Gastrocnemius medialis (tissue), 4 donors: ENCODE measurements at regions of chr17 and their contacts with region 1.

Region 1: GRCh38 chr17:49414622-49415350 is at the start of gene PHB1:
- DNase-seq: peak; percentile 97
- ATAC-seq: peak; percentile 99 to 100
- H3K4me3 ChIP-seq: peak within 1 kb of the TSS; percentile 63 to 97 (median 93)
- H3K27ac ChIP-seq: peak within 1 kb of the TSS; percentile 73 to 90 (median 75)
- H3K4me1 ChIP-seq: peaks cover 14 to 18% of the 10 kb centered on the region in 2 donors
- H3K27me3 ChIP-seq: no peaks in the 10 kb centered on the region
- CTCF ChIP-seq: no peak
- POLR2A ChIP-seq: peak in 1 of 2 donors; percentile 32
- total RNA-seq, gene PHB1: 102 to 137 (median 116) TPM

Region 2: GRCh38 chr17:49239963-49240362 is 174.8 kb before region 1 on chr17:
- in situ Hi-C with region 1: no loop called
- intact Hi-C with region 1: no loop called
- DNase-seq: no peak
- ATAC-seq: no peak
- H3K4me3 ChIP-seq: no peak overlapping the region
- H3K27ac ChIP-seq: no peak overlapping the region
- H3K4me1 ChIP-seq: no peaks in the 10 kb centered on the region
- H3K27me3 ChIP-seq: no peaks in the 10 kb centered on the region
- CTCF ChIP-seq: no peak
- POLR2A ChIP-seq: no peak

Region 3: DNA sequence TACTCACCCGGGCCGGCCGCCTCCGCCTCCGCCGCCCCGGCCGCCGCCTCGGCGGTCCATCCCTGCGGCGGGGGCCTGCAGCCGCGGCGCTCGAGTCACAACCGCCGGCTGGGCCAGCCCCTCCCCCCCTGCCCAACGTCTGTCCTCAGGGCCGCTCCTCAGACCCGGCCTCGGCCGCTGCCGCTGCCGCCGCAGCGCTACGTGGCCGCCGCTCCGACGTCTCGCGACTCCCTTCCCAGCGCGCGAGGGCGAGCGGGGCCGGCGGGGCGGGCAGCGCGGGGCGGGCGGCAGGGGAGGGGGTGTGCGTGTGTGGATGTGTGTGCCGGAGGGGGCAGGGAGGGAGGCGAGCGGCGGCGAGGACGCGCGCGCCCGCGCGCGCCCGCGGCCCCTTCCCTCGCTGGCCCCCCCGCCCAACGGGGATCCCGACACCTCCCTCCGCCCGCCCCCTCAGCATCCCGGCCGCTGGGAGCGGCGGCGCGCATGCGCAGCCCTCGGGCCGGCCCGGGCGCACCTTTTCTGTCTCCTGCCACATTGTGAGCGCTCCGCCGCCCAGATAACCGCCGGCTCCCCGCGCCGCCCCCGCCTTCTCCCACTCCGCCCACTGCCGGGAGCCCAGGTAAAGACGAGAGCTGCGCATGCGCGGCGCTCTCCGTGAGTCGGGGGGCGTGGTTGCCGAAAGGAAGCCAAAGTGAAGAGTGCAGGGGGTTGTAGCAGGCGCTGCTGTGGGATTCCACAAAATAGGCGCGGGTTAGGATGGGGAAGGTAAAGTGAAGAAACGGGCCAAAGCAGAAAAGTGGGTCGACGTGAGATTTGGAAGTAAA is 52.7 kb before region 1 on chr17 and contains the start of gene ZNF652:
- in situ Hi-C with region 1: no loop called
- intact Hi-C with region 1: loop called (anchors 2 kb)
- DNase-seq: peak; percentile 78 to 86
- ATAC-seq: peak; percentile 87 to 89
- H3K4me3 ChIP-seq: peak within 1 kb of the TSS; percentile 88 to 97 (median 92)
- H3K27ac ChIP-seq: peak within 1 kb of the TSS; percentile 80 to 92 (median 84)
- H3K4me1 ChIP-seq: peaks cover 29 to 33% of the 10 kb centered on the region in 2 donors
- H3K27me3 ChIP-seq: no peaks in the 10 kb centered on the region
- CTCF ChIP-seq: no peak
- POLR2A ChIP-seq: peak; percentile 21 to 43
- total RNA-seq, gene ZNF652: 32.8 to 49.6 (median 41.1) TPM

Region 4: GRCh38 chr17:49454050-49454449 is 39.3 kb after region 1 on chr17:
- in situ Hi-C with region 1: no loop called
- intact Hi-C with region 1: no loop called
- DNase-seq: no peak
- ATAC-seq: no peak
- H3K4me3 ChIP-seq: no peak overlapping the region
- H3K27ac ChIP-seq: no peak overlapping the region
- H3K4me1 ChIP-seq: no peaks in the 10 kb centered on the region
- H3K27me3 ChIP-seq: no peaks in the 10 kb centered on the region
- CTCF ChIP-seq: no peak
- POLR2A ChIP-seq: no peak

Region 5: DNA sequence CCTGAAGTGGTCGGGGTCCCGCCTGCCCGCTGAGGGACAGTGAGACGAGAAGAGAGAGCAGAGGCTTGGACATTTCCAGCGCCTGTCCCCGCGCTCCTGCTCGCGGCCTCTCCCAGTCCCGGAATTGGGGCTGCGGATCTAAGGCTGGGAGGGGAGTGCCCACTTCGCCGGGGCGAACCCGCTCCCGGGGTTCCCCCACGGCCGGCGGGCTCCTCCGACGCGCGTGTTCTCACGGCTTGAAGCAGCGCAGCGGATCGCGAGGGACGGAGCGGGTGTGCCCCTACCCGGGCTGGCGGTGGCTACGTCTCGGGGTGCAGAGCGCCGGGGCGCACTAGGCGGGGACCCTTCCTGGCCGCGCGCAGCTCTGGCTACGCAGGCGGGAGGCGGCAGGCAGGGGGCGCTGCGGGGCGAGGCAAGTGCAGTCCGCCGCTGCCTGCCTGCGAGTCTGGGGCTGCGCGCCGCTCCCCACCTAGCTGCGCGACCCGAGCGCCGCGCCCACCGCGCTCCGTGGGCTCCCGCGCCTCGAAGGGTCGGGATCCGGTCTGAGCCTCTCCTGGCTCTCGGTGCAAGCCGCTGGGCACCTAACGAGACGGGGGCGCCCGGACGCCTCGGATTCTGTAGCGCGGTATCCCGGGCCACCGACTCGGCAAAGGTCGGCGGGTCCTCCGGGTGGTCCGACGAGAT is 81.5 kb after region 1 on chr17:
- in situ Hi-C with region 1: no loop called
- intact Hi-C with region 1: no loop called
- DNase-seq: peak; percentile 29 to 48
- ATAC-seq: peak; percentile 70 to 83
- H3K4me3 ChIP-seq: peak overlapping the region; percentile 49 to 67 (median 57)
- H3K27ac ChIP-seq: no peak overlapping the region
- H3K4me1 ChIP-seq: peaks cover 19 to 26% of the 10 kb centered on the region in 2 donors
- H3K27me3 ChIP-seq: peaks cover 34 to 47% (median 38%) of the 10 kb centered on the region in 3 donors
- CTCF ChIP-seq: peak; percentile 75 to 97 (median 92)
- POLR2A ChIP-seq: no peak

Region 6: DNA sequence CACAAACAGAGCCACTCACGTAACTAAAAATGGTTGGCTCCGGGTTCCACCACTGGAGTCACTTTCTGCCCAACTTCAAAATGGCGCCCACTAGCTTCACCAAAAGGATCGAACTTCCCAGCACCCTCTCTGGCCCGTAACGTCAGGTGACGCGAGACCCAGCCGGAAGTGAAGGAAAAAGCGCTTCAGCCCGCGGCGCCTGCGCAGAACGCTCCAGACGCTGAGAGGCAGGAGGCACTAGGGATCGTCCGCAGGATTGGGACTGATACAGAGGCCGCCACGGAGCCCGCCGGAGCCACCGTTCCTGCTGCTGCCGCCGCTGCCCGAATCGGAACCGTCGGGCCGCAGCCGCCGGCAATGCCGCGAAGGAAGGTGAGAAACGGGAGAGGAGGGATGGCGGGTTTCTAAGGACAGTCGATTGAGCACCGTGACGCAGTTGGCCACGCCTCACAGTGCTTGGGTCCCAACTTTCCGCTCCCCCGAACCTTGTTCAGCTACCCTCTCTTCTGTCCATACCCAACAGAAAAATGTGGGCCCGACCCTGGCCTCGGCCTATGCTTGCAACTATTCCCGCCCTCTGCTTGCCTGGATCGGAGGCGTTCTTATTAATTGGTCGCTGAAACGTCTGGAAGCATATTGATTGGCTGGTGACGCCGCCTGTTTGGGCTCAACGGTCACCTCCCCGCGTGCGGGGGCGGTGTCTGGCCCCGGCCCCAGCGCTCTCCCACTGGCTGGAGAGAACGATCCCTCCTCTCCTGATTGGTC is 373.9 kb after region 1 on chr17 and contains the start of gene KAT7:
- in situ Hi-C with region 1: no loop called
- intact Hi-C with region 1: loop called (anchors 5 kb)
- DNase-seq: peak; percentile 99 to 100
- ATAC-seq: peak; percentile 94 to 96
- H3K4me3 ChIP-seq: peak within 1 kb of the TSS; percentile 87 to 98 (median 92)
- H3K27ac ChIP-seq: peak within 1 kb of the TSS; percentile 97 to 100 (median 99)
- H3K4me1 ChIP-seq: peaks cover 46 to 47% of the 10 kb centered on the region in 2 donors
- H3K27me3 ChIP-seq: no peaks in the 10 kb centered on the region
- CTCF ChIP-seq: no peak
- POLR2A ChIP-seq: peak; percentile 94 to 96
- total RNA-seq, gene KAT7: 32.6 to 49.8 (median 45.2) TPM